ENCODE measurements at regions of chr4 and their contacts with region 1.

Region 1: GRCh38 chr4:142353149-142353738 is 492.9 kb downstream of the INPP4B start:
- DNase-seq: no peak
- ATAC-seq: peak; percentile 49 to 65
- H3K4me3 ChIP-seq: no peak overlapping the region
- H3K27ac ChIP-seq: no peak overlapping the region
- H3K4me1 ChIP-seq: peaks cover 4% of the 10 kb centered on the region
- H3K27me3 ChIP-seq: no peaks in the 10 kb centered on the region

Region 2: GRCh38 chr4:142443469-142443868 is 90.2 kb after region 1 on chr4:
- intact Hi-C with region 1: no loop called
- DNase-seq: no peak
- ATAC-seq: no peak
- H3K4me3 ChIP-seq: no peak overlapping the region
- H3K27ac ChIP-seq: no peak overlapping the region
- H3K4me1 ChIP-seq: no peaks in the 10 kb centered on the region
- H3K27me3 ChIP-seq: no peaks in the 10 kb centered on the region

Region 3: DNA sequence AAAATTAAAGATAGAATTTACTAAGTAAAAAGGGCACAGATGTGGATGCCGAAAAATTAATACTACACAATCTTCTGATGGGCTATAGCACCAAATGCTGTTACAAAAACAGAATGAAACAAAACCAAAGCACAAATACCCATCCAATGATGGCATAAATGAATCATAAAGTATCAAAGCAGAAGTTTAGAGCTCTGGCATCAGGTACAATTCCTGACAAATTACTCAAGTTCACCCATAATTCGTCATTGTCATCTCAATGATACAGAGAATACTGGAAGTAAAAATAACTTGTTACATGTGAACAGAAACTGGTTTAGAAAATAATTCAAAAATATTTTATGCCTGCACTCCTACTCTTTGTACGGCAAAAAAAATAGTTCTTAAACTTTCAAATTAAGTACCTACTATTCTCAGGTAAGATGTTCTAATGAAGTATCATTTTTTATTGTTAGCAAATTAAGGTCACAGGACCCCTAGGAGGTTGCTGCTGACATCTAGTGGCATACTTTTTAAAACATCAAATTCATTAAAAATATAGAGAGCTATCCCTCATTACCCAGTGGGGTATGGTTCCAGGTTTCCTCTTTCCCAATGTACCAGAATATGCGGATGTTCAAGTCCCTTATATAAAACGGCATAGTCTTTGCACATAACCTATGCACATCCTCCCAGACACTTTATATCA is 366.8 kb after region 1 on chr4:
- intact Hi-C with region 1: loop called in 1 of 4 experiments (anchors 10 kb)
- DNase-seq: no peak
- ATAC-seq: no peak
- H3K4me3 ChIP-seq: no peak overlapping the region
- H3K27ac ChIP-seq: no peak overlapping the region
- H3K4me1 ChIP-seq: no peaks in the 10 kb centered on the region
- H3K27me3 ChIP-seq: no peaks in the 10 kb centered on the region

Region 4: GRCh38 chr4:142846729-142847596 is 493.7 kb after region 1 on chr4:
- intact Hi-C with region 1: loop called in 1 of 4 experiments (anchors 10 kb)
- DNase-seq: peak in 2 of 3 donors; percentile 45 to 59
- ATAC-seq: peak; percentile 68 to 73
- H3K4me3 ChIP-seq: peak overlapping the region; percentile 72
- H3K27ac ChIP-seq: peak overlapping the region; percentile 22
- H3K4me1 ChIP-seq: no peaks in the 10 kb centered on the region
- H3K27me3 ChIP-seq: no peaks in the 10 kb centered on the region